Common myeloid progenitor, CD34-positive (primary cell): ENCODE measurements at regions of chr2 and their contacts with region 1.

Region 1: DNA sequence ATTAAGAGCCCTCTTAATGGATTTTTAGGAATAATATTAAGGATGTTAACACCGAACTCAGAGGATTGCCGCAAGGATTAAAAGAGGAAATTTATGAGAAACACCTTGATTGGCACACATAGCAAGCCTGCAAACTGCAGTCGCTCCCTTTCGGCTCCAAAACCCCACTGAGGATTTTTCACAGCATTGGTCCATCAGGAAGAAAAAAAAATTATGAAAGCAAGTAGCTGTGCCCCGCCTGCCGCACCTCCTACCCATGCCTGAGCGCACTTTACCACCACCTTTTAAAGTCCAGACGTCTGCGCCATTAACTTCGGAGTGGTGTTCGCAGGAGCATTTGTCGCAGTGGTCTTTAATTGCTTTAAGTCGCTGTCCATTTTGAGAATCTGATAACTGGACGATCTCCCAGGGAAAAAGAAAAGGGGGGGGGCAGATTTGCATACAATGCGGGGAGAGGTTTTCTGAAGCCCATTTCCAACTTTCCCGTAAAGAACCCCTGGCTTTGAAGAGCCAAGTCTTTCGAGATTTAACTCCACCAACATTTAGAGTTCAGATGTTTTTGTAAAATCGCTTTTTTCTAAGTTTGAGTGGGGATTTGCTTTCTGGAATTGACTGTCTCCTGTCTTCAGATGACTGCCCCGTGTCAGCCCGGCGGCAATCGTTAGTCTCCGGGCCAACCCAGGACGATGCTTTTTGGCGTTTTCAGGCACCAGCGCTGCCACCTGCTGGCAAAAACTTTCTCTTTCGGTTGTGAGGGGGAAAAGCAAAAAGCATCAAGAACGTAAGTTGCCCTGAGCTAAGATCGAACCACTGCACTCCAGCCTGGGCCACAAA is 914 bp upstream of the TRABD2A start:
- DNase-seq: peak; percentile 83 to 87 (median 87)
- H3K4me3 ChIP-seq: peak overlapping the region; percentile 16 to 86 (median 63)
- H3K27ac ChIP-seq: no peak overlapping the region
- H3K4me1 ChIP-seq: peaks cover 16 to 30% (median 28%) of the 10 kb centered on the region in 4 experiments
- H3K27me3 ChIP-seq: peaks cover 0 to 55% (median 34%) of the 10 kb centered on the region in 5 experiments

Region 2: DNA sequence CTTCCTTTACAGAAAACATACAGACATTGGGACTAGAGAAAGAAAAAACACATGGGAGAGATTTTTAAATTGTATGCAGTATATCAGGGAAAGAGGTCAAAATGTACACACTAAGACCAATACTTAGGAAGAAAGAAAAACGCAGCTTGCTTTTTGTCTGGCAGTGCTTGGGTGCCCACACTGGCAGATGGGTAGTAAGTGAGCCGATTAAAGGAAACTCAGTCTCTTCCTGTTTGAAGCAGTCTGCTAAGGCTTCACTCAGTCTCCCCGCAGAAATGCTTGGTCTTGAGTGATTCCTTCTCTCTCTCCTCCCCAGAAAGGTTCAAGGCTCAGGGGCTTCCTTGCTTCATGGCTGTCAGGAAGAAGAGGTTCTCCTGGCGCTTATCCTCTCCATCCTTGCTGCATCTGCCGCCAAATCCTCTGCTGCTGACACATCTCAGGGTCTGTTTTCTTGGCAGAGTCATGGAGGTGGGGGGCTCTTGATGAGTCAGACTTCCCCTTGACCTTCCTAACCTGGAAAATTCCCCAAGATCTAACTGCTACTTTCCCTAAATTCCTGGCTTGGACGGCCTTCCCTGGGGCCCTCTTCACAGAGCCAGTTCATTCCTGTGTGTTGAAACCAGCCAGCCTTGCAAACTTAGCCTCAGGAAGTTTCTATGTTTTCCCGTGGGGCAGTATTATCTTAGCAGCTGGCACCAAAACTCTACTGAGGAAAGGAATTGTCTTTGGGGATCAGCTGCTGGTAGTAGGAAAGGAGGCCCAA is 13.1 kb after region 1 on chr2:
- CTCF ChIA-PET with region 1: interaction called, 13 read pairs
- POLR2A ChIA-PET with region 1: interaction called, 3 read pairs
- DNase-seq: peak in 2 of 3 donors; percentile 55 to 71
- H3K4me3 ChIP-seq: peak overlapping the region in 3 of 7 experiments; percentile 19 to 40 (median 22)
- H3K27ac ChIP-seq: no peak overlapping the region
- H3K4me1 ChIP-seq: peaks cover 6 to 42% (median 34%) of the 10 kb centered on the region in 4 experiments
- H3K27me3 ChIP-seq: no peaks in the 10 kb centered on the region